Tibial artery (tissue), 4 donors: ENCODE measurements at regions of chr10 and their contacts with region 1.

Region 1: GRCh38 chr10:24724381-24725228 is 918 bp upstream of the ARHGAP21 start:
- DNase-seq: peak; percentile 99
- H3K4me3 ChIP-seq: peak overlapping the region; percentile 61 to 63
- H3K27ac ChIP-seq: peak overlapping the region; percentile 85 to 90
- H3K4me1 ChIP-seq: peaks cover 0 to 22% (median 14%) of the 10 kb centered on the region in 4 donors
- H3K27me3 ChIP-seq: no peaks in the 10 kb centered on the region
- CTCF ChIP-seq: no peak

Region 2: DNA sequence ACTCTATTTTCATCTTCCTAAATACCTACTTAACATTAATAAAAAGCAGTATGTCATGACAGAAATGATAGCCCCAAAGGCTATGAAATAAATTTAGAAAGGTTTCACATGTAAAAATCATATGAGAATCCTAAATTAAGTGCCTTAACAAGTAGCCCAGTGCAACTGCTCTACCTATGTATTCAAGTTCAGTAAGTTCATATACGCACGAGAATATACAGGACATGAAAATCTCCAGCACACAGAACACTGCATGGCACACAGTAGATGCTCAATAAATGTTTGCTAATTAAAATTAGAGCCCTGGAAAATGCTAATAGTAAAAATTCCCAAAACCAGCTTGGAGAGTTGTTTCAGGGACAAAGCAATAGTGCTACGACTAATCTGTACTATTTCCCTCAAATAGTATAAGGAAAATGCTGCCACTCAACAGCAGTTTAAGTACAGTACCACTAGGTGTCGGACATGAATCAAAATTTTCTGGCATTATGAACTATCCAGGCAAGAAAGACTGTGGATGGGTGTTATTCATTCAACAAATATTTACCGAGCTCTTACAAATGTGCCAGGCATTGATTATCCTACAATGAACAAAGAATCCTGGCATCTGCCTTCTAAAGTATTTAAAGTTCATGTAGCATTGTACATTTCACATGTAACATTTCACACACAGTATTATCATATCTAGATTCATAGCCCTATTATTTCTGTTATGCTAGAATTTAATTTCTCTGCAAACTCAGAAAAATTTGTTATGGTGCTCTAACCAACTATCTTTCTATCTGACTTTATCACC is 81.8 kb before region 1 on chr10:
- intact Hi-C with region 1: loop called (anchors 10 kb)
- DNase-seq: no peak
- H3K4me3 ChIP-seq: no peak overlapping the region
- H3K27ac ChIP-seq: no peak overlapping the region
- H3K4me1 ChIP-seq: peaks cover 0 to 64% (median 10%) of the 10 kb centered on the region in 4 donors
- H3K27me3 ChIP-seq: no peaks in the 10 kb centered on the region
- CTCF ChIP-seq: peak; percentile 77 to 79

Region 3: GRCh38 chr10:24866604-24867583 is 142.3 kb after region 1 on chr10:
- intact Hi-C with region 1: no loop called
- DNase-seq: peak; percentile 65 to 77
- H3K4me3 ChIP-seq: peak overlapping the region; percentile 19 to 41
- H3K27ac ChIP-seq: peak overlapping the region; percentile 3 to 46
- H3K4me1 ChIP-seq: peaks cover 0 to 18% (median 4%) of the 10 kb centered on the region in 4 donors
- H3K27me3 ChIP-seq: no peaks in the 10 kb centered on the region
- CTCF ChIP-seq: no peak

Region 4: DNA sequence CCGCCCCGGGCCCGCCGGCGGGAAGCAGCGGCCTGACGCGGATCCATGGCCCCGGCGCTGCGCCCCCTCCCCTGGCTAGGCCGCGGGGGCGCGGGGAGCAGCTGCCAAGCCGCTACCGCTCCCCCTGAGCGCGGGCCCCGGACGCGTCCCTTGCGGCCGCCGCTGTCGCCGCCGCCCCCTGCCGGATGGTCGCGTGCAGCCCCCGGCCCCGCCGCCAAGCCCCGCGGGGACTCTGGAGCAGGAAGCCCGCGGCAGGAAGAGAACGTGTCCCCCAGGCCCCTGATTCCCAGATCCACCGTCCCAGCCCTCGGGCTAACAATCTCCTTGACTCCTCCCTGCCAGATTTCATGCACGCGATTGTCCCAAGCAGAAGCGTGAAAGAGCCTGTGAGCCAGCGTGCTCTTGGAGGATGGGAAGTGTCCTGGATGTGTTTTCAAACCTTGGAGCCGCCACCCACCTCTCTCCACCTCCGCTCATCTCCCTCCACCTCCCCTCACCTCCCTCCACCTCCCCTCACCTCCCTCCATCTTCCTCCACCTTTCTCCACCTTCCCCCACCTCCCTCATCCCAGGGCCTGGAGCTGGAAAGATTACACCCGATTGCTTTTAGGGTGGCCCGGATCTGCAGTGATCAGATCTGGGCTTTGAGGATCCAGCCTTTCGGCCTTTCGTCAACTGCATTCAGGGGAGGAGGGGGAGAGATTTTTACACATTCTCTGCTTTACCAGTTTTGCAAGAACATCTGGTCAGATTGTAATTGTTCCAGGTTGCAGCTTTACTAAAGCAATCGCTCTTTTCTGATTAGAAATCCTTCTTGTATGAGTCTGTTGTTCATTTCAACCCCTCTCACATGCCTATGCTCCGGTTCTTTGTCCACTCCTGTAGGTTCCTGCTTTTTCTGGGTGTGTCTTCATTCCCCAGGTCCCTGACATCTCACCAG is 228.4 kb after region 1 on chr10:
- intact Hi-C with region 1: loop called (anchors 5 kb)
- DNase-seq: peak in 1 of 2 donors; percentile 50
- H3K4me3 ChIP-seq: peak overlapping the region; percentile 61 to 82
- H3K27ac ChIP-seq: peak overlapping the region; percentile 69 to 71
- H3K4me1 ChIP-seq: peaks cover 0 to 23% (median 13%) of the 10 kb centered on the region in 4 donors
- H3K27me3 ChIP-seq: no peaks in the 10 kb centered on the region
- CTCF ChIP-seq: peak; percentile 9 to 32

Region 5: DNA sequence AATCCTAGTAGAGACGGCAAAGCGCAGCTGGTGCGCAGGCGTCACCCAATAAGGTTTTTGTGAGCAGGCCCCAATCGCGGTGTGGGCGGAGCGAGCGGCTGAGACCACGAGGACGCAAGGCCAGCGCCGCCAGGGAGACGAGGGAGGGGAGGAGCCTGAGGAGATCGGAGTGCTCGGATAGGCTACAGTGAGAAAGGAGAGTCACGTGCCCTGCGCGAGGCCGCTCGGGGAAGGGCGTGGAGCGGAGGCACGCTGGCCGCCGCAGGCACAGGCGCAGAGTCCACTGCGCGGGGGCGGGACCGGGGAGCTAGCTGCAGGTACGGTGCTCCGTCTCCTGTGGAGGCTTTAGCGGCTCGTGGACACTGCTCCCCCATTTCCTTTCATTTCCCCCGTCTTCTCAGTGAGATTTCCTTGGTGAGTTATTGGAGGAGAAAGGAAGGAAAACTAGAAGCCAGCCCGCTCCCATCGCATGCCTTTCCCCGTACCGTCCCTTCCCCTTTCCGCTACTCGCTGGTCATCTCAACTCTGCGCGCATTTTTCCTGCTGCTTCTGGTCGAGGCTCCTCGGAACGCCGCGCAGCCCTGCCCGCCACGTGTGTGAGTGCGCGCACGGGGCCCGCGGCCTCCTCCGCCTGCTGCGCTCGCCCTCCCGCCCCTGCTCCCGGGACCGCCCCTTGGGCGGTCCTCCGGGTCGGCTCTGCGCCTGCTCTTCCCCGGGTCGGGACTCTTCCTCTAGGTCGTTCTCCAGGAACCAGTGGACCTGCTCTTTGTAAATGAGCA is 292.0 kb after region 1 on chr10 and contains the start of gene THNSL1:
- intact Hi-C with region 1: loop called (anchors 5 kb)
- DNase-seq: peak; percentile 99
- H3K4me3 ChIP-seq: peak within 1 kb of the TSS; percentile 66 to 70
- H3K27ac ChIP-seq: peak within 1 kb of the TSS; percentile 83
- H3K4me1 ChIP-seq: peaks cover 0 to 13% (median 2%) of the 10 kb centered on the region in 4 donors
- H3K27me3 ChIP-seq: no peaks in the 10 kb centered on the region
- CTCF ChIP-seq: no peak